ENCODE measurements at regions of chr11 and their contacts with region 1.

Region 1: GRCh38 chr11:75697906-75698563 is 19.6 kb upstream of the MOGAT2 start:
- DNase-seq: peak; percentile 74
- H3K4me3 ChIP-seq: no peak overlapping the region
- H3K27ac ChIP-seq: no peak overlapping the region
- H3K4me1 ChIP-seq: peaks cover 9% of the 10 kb centered on the region
- H3K27me3 ChIP-seq: no peaks in the 10 kb centered on the region
- CTCF ChIP-seq: no peak

Region 2: GRCh38 chr11:75301131-75301530 is 396.9 kb before region 1 on chr11:
- CTCF ChIA-PET with region 1: no interaction called
- dilution Hi-C with region 1: no loop called
- in situ Hi-C with region 1: no loop called
- intact Hi-C with region 1: no loop called
- DNase-seq: no peak
- H3K4me3 ChIP-seq: no peak overlapping the region
- H3K27ac ChIP-seq: no peak overlapping the region
- H3K4me1 ChIP-seq: no peaks in the 10 kb centered on the region
- H3K27me3 ChIP-seq: no peaks in the 10 kb centered on the region
- CTCF ChIP-seq: no peak

Region 3: GRCh38 chr11:75743711-75744563 is 45.9 kb after region 1 on chr11:
- CTCF ChIA-PET with region 1: no interaction called
- dilution Hi-C with region 1: no loop called
- in situ Hi-C with region 1: no loop called
- intact Hi-C with region 1: no loop called
- DNase-seq: no peak
- H3K4me3 ChIP-seq: no peak overlapping the region
- H3K27ac ChIP-seq: no peak overlapping the region
- H3K4me1 ChIP-seq: no peaks in the 10 kb centered on the region
- H3K27me3 ChIP-seq: peaks cover 8% of the 10 kb centered on the region
- CTCF ChIP-seq: no peak

Region 4: DNA sequence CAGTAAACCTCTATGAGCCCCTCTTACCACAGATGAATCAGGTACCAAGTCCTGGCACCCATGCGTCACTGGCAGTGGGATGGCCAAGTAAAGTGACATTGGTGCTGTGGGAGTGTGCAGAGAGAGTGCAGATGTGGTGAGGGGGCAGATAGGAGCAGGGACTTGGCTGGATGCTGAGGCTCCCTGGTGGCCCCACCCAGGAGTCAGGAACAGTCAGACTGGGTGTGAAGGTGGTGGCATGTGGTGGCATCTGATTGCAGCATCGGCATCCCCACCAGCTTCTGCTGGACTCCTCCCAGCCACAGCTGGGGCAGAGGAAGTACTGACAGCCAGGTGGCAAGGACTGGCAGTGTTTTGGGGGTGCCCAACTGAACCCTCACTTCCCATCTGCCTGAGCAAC is 81.9 kb after region 1 on chr11:
- CTCF ChIA-PET with region 1: no interaction called
- dilution Hi-C with region 1: loop called (anchors 5 kb)
- in situ Hi-C with region 1: no loop called
- intact Hi-C with region 1: no loop called
- DNase-seq: no peak
- H3K4me3 ChIP-seq: no peak overlapping the region
- H3K27ac ChIP-seq: no peak overlapping the region
- H3K4me1 ChIP-seq: peaks cover 8% of the 10 kb centered on the region
- H3K27me3 ChIP-seq: no peaks in the 10 kb centered on the region
- CTCF ChIP-seq: no peak

Region 5: GRCh38 chr11:76185931-76186401 is 487.9 kb after region 1 on chr11:
- CTCF ChIA-PET with region 1: no interaction called
- dilution Hi-C with region 1: no loop called
- in situ Hi-C with region 1: no loop called
- intact Hi-C with region 1: no loop called
- DNase-seq: no peak
- H3K4me3 ChIP-seq: no peak overlapping the region
- H3K27ac ChIP-seq: no peak overlapping the region
- H3K4me1 ChIP-seq: no peaks in the 10 kb centered on the region
- H3K27me3 ChIP-seq: no peaks in the 10 kb centered on the region
- CTCF ChIP-seq: no peak